ENCODE measurements at regions of chr1 and their contacts with region 1.

Region 1: GRCh38 chr1:151594143-151594625 is 17.7 kb upstream of the SNX27 start:
- DNase-seq: peak; percentile 91
- H3K4me3 Mint-ChIP-seq: peak overlapping the region; percentile 46
- H3K27ac Mint-ChIP-seq: no peak overlapping the region
- H3K4me1 Mint-ChIP-seq: peaks cover 9% of the 10 kb centered on the region
- H3K27me3 Mint-ChIP-seq: peaks cover 3% of the 10 kb centered on the region

Region 2: DNA sequence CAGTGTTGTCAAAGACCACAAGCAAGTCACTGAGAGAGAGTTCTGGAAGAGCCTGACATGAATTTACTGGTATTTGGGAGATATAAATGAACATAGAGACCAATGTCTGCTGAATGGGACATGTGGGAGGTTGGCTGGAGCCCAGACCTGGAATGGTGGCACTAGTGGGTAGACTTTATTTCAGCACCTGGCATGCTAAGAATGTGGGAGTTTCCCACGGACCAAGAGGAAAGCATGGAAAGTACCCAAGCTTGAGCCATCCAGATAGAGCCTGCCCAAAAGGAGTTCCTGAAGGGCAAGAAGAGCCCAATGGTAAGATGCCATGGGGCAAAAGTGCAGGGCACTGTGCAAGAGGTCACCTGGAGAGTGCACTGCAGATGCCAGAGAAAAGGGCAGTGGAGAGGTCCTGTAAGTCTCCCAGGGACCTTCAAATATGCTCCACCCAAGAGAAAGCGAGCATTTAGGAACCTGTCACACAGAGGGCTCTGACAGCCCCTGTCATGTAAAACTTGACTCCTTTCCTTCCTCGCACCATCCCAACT is 320.2 kb before region 1 on chr1:
- CTCF ChIA-PET with region 1: no interaction called
- POLR2A ChIA-PET with region 1: no interaction called
- intact Hi-C with region 1: no loop called
- DNase-seq: no peak
- H3K4me3 Mint-ChIP-seq: no peak overlapping the region
- H3K27ac Mint-ChIP-seq: no peak overlapping the region
- H3K4me1 Mint-ChIP-seq: peaks cover 18% of the 10 kb centered on the region
- H3K27me3 Mint-ChIP-seq: no peaks in the 10 kb centered on the region

Region 3: GRCh38 chr1:151443846-151444782 is 150.1 kb before region 1 on chr1:
- CTCF ChIA-PET with region 1: interaction called, 10 read pairs
- POLR2A ChIA-PET with region 1: no interaction called
- intact Hi-C with region 1: loop called (anchors 2 kb)
- DNase-seq: peak; percentile 75
- H3K4me3 Mint-ChIP-seq: no peak overlapping the region
- H3K27ac Mint-ChIP-seq: no peak overlapping the region
- H3K4me1 Mint-ChIP-seq: peaks cover 53% of the 10 kb centered on the region
- H3K27me3 Mint-ChIP-seq: no peaks in the 10 kb centered on the region

Region 4: DNA sequence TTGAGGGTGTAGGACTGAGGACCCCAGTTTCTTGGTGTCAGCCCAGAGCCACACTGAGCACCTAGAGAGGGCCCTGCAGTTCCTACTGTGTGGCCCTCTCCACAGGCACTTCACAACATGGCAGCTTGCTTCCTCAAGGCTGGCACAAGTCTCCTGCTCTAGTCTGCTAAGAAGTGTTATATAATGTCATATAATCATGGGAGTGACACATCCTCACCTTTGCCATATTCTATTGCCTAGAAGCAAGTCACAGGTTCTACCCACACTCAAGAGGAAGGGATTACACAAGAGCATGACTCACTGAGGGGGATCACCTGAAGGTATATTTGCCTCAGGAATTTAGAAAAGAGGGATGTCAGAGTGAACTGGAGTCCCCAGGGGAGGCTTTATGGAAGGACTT is 12.2 kb after region 1 on chr1:
- CTCF ChIA-PET with region 1: interaction called, 17 read pairs
- POLR2A ChIA-PET with region 1: no interaction called
- intact Hi-C with region 1: no loop called
- DNase-seq: no peak
- H3K4me3 Mint-ChIP-seq: no peak overlapping the region
- H3K27ac Mint-ChIP-seq: no peak overlapping the region
- H3K4me1 Mint-ChIP-seq: peaks cover 4% of the 10 kb centered on the region
- H3K27me3 Mint-ChIP-seq: peaks cover 6% of the 10 kb centered on the region

Region 5: DNA sequence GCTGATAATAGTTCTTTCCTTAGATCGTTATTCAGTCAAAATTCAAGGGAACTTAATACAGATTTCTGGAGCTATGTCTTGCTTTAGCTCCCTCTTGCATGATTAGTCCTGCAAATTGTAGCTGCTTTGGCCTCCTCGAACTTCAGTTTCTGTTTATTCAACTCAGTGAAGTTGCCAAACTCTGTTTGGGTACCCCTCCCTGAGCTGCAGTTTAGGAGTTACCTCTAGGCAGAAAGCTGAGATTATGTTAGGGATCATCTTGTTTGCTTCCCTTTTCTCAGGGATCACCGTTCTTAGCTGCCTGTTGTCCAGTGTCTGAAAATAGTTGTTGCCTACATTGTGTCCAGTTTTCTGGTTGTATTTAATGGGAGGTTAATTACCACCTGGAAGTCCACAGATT is 61.2 kb after region 1 on chr1:
- CTCF ChIA-PET with region 1: interaction called, 12 read pairs
- POLR2A ChIA-PET with region 1: no interaction called
- intact Hi-C with region 1: no loop called
- DNase-seq: no peak
- H3K4me3 Mint-ChIP-seq: no peak overlapping the region
- H3K27ac Mint-ChIP-seq: no peak overlapping the region
- H3K4me1 Mint-ChIP-seq: peaks cover 11% of the 10 kb centered on the region
- H3K27me3 Mint-ChIP-seq: no peaks in the 10 kb centered on the region

Region 6: GRCh38 chr1:151739590-151740375 is 145.6 kb after region 1 on chr1:
- CTCF ChIA-PET with region 1: interaction called, 21 read pairs
- POLR2A ChIA-PET with region 1: no interaction called
- intact Hi-C with region 1: loop called (anchors 1 kb)
- DNase-seq: no peak
- H3K4me3 Mint-ChIP-seq: no peak overlapping the region
- H3K27ac Mint-ChIP-seq: no peak overlapping the region
- H3K4me1 Mint-ChIP-seq: peaks cover 5% of the 10 kb centered on the region
- H3K27me3 Mint-ChIP-seq: no peaks in the 10 kb centered on the region